ENCODE measurements at regions of chr14 and their contacts with region 1.

Region 1: DNA sequence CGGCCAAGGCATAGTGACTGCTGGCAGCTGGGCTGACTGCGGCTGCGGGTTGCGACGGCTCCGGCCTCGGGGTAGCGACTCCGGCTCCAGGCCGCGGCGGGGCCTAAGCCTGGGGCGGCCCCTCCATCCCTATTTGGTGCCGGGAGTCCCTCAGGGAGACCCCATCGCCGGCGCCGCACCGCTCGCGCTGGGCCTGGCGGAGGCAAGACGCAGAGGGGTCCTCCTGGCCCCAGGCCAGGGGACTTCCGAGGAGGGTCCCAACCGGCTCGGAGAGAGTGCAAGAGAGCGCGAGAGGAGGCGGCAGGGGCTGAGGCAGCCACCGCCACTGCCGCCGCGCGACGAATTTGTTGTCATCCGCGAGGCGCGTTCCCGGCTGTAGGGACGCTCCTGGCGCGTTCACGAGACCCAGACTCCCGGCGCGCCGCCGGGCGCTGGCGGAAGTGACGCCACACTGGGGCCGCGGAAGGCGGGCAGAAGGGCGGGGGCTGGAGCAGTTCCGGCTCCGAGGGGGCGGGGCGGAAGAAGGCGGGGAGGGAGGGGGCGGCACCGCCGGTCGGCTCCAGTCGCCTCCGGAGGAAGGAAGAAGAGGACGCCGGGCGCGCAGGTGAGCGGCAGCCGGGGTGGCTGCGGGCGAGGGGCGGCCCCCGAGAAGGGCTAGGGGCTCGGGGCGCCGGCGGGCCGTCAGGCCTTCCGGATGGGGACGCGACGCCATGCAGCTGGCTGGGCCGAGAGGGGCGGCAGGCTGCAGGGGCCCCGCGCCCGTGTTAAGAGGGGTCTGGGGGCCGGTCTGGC is at the starts of genes ATG2B and GSKIP:
- DNase-seq: peak; percentile 68 to 95
- H3K4me3 ChIP-seq: peak within 1 kb of the TSS; percentile 87 to 92
- H3K27ac ChIP-seq: peak within 1 kb of the TSS; percentile 92 to 93
- H3K4me1 ChIP-seq: peaks cover 9 to 17% of the 10 kb centered on the region in 2 donors
- H3K27me3 ChIP-seq: no peaks in the 10 kb centered on the region
- CTCF ChIP-seq: no peak
- total RNA-seq, gene ATG2B: 15.8 TPM
- total RNA-seq, gene GSKIP: 17.5 TPM

Region 2: GRCh38 chr14:96391293-96392118 is 28.3 kb after region 1 on chr14:
- intact Hi-C with region 1: loop called (anchors 1 kb)
- DNase-seq: peak; percentile 82 to 98
- H3K4me3 ChIP-seq: peak overlapping the region; percentile 41 to 77
- H3K27ac ChIP-seq: peak overlapping the region; percentile 49 to 62
- H3K4me1 ChIP-seq: peaks cover 3 to 6% of the 10 kb centered on the region in 2 donors
- H3K27me3 ChIP-seq: no peaks in the 10 kb centered on the region
- CTCF ChIP-seq: no peak

Region 3: DNA sequence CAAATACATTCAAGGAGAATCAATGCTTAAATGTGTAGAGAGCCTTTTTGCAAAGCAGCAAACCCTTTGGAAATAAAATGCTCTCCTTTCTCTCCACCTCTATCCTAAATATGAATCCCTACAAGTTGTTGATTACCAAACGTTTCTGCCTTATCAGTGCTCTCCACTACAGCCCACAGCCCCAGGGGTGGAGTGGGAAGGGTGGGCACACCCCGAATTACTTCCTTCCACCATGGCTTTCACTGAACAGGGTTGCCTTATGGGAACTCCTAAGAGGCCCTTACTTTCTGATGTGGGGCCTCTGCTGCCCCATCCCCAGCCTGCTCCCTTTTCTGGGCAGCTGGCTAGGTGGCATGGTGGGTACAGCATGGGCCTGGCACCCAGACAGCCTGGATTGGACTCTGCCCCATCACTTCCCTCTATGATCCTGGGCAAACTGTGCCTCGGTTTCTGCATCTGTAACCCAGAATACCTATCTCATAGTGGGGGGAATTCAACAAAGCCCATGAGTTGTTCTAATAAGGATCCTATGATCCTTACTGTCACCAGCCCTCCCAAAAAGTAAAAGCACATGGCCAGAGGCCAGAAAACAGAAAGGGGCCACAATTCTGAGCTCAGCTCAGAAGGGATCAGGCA is 44.9 kb after region 1 on chr14:
- intact Hi-C with region 1: no loop called
- DNase-seq: no peak
- H3K4me3 ChIP-seq: no peak overlapping the region
- H3K27ac ChIP-seq: no peak overlapping the region
- H3K4me1 ChIP-seq: no peaks in the 10 kb centered on the region
- H3K27me3 ChIP-seq: no peaks in the 10 kb centered on the region
- CTCF ChIP-seq: no peak

Region 4: GRCh38 chr14:96796851-96797581 is 433.9 kb after region 1 on chr14 and contains the start of gene VRK1:
- intact Hi-C with region 1: loop called (anchors 10 kb)
- DNase-seq: peak; percentile 83 to 96
- H3K4me3 ChIP-seq: peak within 1 kb of the TSS; percentile 66 to 80
- H3K27ac ChIP-seq: no peak within 1 kb of the TSS
- H3K4me1 ChIP-seq: peaks cover 5 to 9% of the 10 kb centered on the region in 2 donors
- H3K27me3 ChIP-seq: no peaks in the 10 kb centered on the region
- CTCF ChIP-seq: no peak
- total RNA-seq, gene VRK1: 2.4 TPM